Cardiac septum (tissue), 1 donor: ENCODE measurements at regions of chr19 and their contacts with region 1.

Region 1: GRCh38 chr19:30222428-30222873 is 149.7 kb upstream of the ZNF536 start:
- DNase-seq: peak; percentile 58

Region 2: GRCh38 chr19:30649934-30650614 is 427.6 kb after region 1 on chr19:
- intact Hi-C with region 1: loop called (anchors 5 kb)
- DNase-seq: no peak

Region 3: GRCh38 chr19:30662211-30662861 is 439.9 kb after region 1 on chr19:
- intact Hi-C with region 1: loop called (anchors 5 kb)
- DNase-seq: no peak